PC-3 (cell line): ENCODE measurements at regions of chr17 and their contacts with region 1.

Region 1: GRCh38 chr17:64420143-64420971 is 28.6 kb upstream of the MILR1 start:
- DNase-seq: peak; percentile 91
- ATAC-seq: peak; percentile 73
- H3K4me3 ChIP-seq: no peak overlapping the region
- H3K27ac ChIP-seq: no peak overlapping the region
- H3K4me1 ChIP-seq: peaks cover 10% of the 10 kb centered on the region
- H3K27me3 ChIP-seq: no peaks in the 10 kb centered on the region
- CTCF ChIP-seq: peak; percentile 93

Region 2: DNA sequence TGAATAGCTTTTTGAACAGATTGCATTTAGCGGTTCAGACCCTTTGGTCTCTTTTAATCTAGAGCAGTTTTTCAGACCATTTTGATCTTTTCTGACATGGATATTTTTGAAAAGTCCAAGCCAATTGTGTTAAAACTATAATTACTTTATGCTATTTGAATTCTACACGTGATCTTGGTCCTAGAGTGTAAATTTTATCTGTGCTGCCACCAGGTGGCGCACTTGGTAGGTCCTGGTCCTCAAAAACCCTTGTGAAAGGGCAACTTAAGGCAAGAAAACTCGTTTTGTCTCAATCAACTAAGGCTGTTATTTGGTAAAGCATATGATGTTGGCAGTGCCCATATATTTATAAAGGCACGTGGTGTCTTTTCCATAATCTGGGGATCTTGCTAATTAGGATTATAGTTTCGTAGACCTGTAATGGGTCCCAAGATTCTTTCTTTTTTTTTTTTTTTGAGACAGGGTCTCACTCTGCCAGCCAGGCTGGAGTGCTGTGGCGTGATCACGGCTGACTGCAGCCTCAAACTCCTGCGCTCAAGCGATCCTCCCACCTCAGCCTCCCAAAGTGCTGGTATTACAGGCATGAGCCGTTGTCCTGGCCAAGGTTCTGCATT is 113.4 kb before region 1 on chr17:
- CTCF ChIA-PET with region 1: interaction called, 5 read pairs
- POLR2A ChIA-PET with region 1: no interaction called
- intact Hi-C with region 1: loop called (anchors 1 kb)
- DNase-seq: peak; percentile 89
- ATAC-seq: peak; percentile 75
- H3K4me3 ChIP-seq: no peak overlapping the region
- H3K27ac ChIP-seq: no peak overlapping the region
- H3K4me1 ChIP-seq: peaks cover 6% of the 10 kb centered on the region
- H3K27me3 ChIP-seq: no peaks in the 10 kb centered on the region
- CTCF ChIP-seq: peak; percentile 98

Region 3: DNA sequence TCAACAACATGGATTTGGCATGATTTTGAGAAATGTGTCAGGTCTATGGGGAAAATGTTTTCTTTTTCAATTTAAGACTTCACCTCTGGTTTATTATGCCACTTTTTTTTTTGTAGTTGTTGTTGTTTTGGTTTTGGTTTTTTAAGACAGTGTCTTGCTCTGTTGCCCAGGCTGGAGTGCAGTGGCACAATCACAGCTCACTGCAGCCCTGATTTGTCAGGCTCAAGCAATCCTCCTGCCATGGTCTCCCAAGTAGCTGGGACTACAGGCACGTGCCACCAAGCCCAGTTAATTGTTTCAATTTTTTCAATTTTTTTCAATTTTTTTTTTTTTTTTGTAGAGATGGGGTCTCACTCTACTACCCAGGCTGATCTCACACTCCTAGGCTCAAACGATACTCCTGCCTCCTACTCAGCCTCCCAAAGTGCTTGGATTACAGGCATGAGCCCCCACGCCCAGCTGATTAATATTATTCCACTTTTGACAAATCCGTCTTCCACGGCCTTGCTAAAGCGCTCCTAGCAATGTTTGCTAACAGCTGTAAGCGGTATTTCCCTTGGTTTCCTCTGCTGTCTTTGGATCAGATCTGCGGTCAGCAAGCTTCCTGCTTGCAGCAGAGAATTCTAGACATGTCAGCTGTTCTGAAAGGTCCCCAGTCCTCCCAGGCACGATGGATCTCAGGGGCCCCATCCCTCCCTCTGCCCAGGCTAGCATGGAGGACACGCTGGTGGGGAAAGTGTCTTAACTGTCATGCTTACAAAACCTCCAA is 21.6 kb after region 1 on chr17:
- CTCF ChIA-PET with region 1: interaction called, 3 read pairs
- POLR2A ChIA-PET with region 1: no interaction called
- intact Hi-C with region 1: loop called (anchors 2 kb)
- DNase-seq: no peak
- ATAC-seq: no peak
- H3K4me3 ChIP-seq: no peak overlapping the region
- H3K27ac ChIP-seq: peak overlapping the region; percentile 80
- H3K4me1 ChIP-seq: peaks cover 22% of the 10 kb centered on the region
- H3K27me3 ChIP-seq: no peaks in the 10 kb centered on the region
- CTCF ChIP-seq: no peak

Region 4: GRCh38 chr17:64491034-64491859 is 70.9 kb after region 1 on chr17:
- CTCF ChIA-PET with region 1: interaction called, 52 read pairs
- POLR2A ChIA-PET with region 1: no interaction called
- intact Hi-C with region 1: loop called (anchors 1 kb)
- DNase-seq: peak; percentile 67
- ATAC-seq: peak; percentile 76
- H3K4me3 ChIP-seq: no peak overlapping the region
- H3K27ac ChIP-seq: no peak overlapping the region
- H3K4me1 ChIP-seq: peaks cover 18% of the 10 kb centered on the region
- H3K27me3 ChIP-seq: no peaks in the 10 kb centered on the region
- CTCF ChIP-seq: peak; percentile 85

Region 5: GRCh38 chr17:64648234-64648633 is 227.9 kb after region 1 on chr17:
- CTCF ChIA-PET with region 1: interaction called, 4 read pairs
- POLR2A ChIA-PET with region 1: no interaction called
- intact Hi-C with region 1: loop called (anchors 10 kb)
- DNase-seq: no peak
- ATAC-seq: no peak
- H3K4me3 ChIP-seq: no peak overlapping the region
- H3K27ac ChIP-seq: no peak overlapping the region
- H3K4me1 ChIP-seq: peaks cover 20% of the 10 kb centered on the region
- H3K27me3 ChIP-seq: no peaks in the 10 kb centered on the region
- CTCF ChIP-seq: no peak